ENCODE measurements at regions of chr1 and their contacts with region 1.

Region 1: DNA sequence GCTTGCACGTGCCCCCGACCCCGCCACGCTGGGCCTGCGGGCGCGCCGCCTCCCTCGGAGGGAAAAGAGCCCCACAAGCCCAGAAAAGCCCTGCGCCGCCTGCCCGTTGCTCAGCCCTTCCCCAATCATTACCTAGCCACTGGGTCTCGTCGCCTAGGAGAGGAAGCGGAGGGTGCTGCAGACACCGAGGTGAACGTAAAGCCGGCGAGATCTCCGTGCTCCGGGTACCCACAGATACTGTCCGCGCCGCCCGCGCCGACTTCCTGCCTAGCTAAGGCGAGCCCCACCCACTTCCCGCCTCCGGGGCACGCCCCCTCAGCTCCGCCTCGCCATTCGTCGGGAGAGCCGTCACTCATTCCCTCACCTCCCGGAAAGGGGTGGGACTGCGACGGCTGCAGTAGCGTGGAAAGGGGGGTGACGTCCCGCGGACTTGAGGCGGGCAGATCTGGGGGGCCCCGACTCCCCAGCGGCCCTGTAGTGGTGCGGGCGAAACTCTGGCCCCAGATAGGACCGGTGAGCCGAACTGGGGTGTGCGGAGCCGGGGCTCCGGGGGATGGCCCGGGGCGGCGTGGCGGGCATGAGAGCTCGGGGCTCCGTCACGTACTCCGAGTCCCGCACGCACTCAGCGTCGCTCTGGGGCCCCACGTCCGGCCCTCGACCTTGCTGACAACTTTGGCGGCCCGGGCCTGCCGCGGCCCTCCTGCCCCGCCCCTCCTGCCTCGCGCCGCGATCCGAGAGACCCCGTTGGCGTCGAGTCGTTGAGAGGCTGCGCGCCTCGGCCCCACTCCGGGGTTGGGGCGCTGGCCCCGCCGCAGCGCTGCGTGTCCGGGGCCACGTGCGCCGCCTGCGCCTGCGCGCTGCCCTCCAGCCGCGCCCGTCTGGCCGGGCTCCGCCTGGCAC is at the start of gene ENO1:
- DNase-seq: peak; percentile 90 to 100
- H3K4me3 ChIP-seq: peak within 1 kb of the TSS; percentile 90 to 97 (median 92)
- H3K27ac ChIP-seq: peak within 1 kb of the TSS; percentile 92
- H3K4me1 ChIP-seq: peaks cover 6 to 21% (median 15%) of the 10 kb centered on the region in 4 experiments
- H3K27me3 ChIP-seq: no peaks in the 10 kb centered on the region
- CTCF ChIP-seq: no peak
- EP300 ChIP-seq: no peak
- POLR2A ChIP-seq: peak; percentile 87 to 89
- RAD21 ChIP-seq: no peak
- total RNA-seq, gene ENO1: 2,080 and 2,117 TPM in 2 replicates

Region 2: DNA sequence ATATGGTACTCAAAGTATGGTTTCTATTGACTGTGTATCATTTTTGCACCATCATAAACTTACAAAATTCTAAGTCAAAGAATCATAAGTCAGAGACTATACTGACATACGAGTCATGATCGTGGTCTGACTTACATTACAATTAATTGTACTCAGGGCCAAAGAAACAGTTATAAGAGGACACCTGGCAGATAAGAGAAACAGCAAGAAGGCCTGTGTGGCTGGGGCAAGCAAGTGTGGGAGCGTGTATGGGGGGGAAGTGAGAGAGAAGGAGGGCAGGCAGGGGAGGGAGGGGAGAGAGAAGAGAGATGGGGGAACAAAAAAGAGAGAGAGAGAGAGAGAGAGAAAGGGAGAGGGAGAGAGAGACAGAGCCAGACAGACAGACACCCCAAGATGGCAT is 132.1 kb before region 1 on chr1:
- CTCF ChIA-PET with region 1: no interaction called
- POLR2A ChIA-PET with region 1: no interaction called
- DNase-seq: no peak
- H3K4me3 ChIP-seq: no peak overlapping the region
- H3K27ac ChIP-seq: no peak overlapping the region
- H3K4me1 ChIP-seq: no peaks in the 10 kb centered on the region; a peak in 1 of 7 replicates
- H3K27me3 ChIP-seq: no peaks in the 10 kb centered on the region
- CTCF ChIP-seq: no peak
- EP300 ChIP-seq: no peak
- POLR2A ChIP-seq: no peak
- RAD21 ChIP-seq: no peak

Region 3: GRCh38 chr1:8858888-8859706 is 19.6 kb before region 1 on chr1:
- CTCF ChIA-PET with region 1: interaction called, 59 read pairs
- POLR2A ChIA-PET with region 1: interaction called, 880 read pairs
- DNase-seq: no peak
- H3K4me3 ChIP-seq: no peak overlapping the region
- H3K27ac ChIP-seq: no peak overlapping the region
- H3K4me1 ChIP-seq: peaks cover 2 to 6% (median 3%) of the 10 kb centered on the region in 4 experiments; a peak in 6 of 7 replicates
- H3K27me3 ChIP-seq: no peaks in the 10 kb centered on the region
- CTCF ChIP-seq: peak in 2 of 3 experiments; percentile 61 to 72; a peak in 3 of 4 replicates
- EP300 ChIP-seq: no peak
- POLR2A ChIP-seq: peak; percentile 23 to 31; a peak in 2 of 3 replicates
- RAD21 ChIP-seq: peak; percentile 48 to 62; a peak in 3 of 4 replicates

Region 4: DNA sequence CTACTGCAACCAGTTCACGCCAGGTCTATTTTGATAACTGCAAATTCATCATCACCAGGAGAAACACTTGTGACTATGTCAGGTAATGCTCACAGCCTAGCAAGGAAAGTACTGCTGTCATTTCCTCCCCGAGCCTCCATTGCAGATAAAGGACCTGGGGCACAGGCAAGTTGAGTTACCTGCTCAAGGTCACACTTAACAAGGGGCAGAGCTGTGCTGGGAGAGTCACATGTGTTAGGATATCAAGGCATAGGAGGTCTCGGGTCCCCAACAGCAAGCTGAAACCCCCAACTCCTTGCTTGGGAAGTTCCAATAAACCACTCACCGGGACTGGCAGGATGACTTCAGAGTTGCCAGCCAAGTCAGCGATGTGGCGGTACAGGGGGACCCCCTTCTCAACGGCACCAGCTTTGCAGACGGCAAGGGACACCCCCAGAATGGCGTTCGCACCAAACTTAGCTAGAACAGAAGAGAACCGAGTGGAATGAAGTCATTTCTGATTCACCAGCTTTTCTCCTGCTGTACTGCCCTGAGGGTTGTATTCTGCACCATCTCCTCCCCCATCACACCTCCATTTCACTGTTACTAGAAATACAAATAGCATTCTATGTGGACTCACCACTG is 11.8 kb before region 1 on chr1:
- CTCF ChIA-PET with region 1: interaction called, 59 read pairs
- POLR2A ChIA-PET with region 1: interaction called, 880 read pairs
- DNase-seq: no peak
- H3K4me3 ChIP-seq: no peak overlapping the region
- H3K27ac ChIP-seq: no peak overlapping the region
- H3K4me1 ChIP-seq: peaks cover 0 to 13% (median 4%) of the 10 kb centered on the region in 4 experiments; a peak in 5 of 7 replicates
- H3K27me3 ChIP-seq: no peaks in the 10 kb centered on the region
- CTCF ChIP-seq: no peak
- EP300 ChIP-seq: no peak
- POLR2A ChIP-seq: peak in 1 of 2 experiments; percentile 53; a peak in 1 of 3 replicates
- RAD21 ChIP-seq: no peak

Region 5: DNA sequence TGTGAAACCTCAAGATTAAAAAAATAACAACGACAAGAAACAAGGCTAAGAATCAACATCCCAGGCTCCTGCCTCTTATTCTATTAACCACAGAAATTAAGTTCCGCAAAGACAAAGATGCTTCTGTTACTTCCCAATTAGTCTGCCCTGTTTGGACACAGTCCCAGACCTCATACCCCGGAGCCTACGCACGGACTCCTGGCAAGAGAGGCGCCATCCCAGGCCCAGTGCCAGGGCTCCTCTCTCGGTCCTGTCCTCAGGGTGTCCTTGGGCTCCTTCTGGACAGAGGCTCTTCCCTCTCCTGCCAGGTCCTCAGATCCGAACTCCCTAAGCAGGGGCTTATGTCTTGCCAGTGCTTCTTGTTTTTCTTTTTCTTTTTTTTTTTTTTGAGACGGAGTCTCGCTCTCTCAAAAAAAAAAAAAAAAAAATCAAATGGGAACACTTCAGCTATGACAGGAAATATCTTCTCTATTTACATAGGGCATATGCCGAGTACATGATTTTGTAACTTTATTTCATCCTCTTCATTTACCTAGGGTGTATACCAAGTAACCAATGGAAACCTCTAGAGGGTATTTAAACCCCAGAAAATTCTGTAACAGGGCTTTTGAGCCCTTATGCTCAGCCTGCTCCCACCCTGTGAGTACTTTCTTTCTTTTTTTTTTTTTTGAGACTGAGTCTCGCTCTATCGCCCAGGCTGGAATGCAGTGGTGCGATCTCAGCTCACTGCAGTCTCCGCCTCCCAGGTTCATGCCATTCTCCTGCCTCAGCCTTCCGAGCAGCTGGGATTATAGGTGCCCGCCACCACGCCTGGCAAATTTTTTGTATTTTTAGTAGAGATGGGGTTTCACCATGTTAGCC is 11.5 kb after region 1 on chr1:
- CTCF ChIA-PET with region 1: interaction called, 4 read pairs
- POLR2A ChIA-PET with region 1: interaction called, 27 read pairs
- DNase-seq: no peak
- H3K4me3 ChIP-seq: no peak overlapping the region
- H3K27ac ChIP-seq: no peak overlapping the region
- H3K4me1 ChIP-seq: no peaks in the 10 kb centered on the region
- H3K27me3 ChIP-seq: no peaks in the 10 kb centered on the region; a peak in 1 of 7 replicates
- CTCF ChIP-seq: no peak
- EP300 ChIP-seq: no peak
- POLR2A ChIP-seq: no peak
- RAD21 ChIP-seq: no peak

Region 6: DNA sequence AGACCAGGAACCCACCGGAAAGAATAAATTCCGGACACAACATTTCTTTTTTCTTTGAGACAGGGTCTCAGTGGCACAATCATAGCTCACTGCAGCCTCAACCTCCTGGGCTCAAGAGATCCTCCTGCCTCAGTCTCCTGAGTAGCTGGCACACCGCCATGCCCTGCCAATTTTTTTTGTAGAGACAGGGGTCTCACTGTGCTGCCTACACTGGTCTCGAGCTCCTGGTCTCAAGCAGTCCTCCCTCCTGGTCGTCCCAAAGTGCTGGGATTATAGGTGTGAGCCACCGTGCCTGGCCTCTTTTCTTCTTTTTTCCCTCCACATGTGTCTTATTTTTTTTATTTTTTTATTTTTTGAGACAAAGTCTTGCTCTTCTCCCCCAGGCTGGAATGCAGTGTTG is 20.4 kb after region 1 on chr1:
- CTCF ChIA-PET with region 1: interaction called, 8 read pairs
- POLR2A ChIA-PET with region 1: interaction called, 13 read pairs
- DNase-seq: no peak
- H3K4me3 ChIP-seq: no peak overlapping the region
- H3K27ac ChIP-seq: no peak overlapping the region
- H3K4me1 ChIP-seq: no peaks in the 10 kb centered on the region
- H3K27me3 ChIP-seq: no peaks in the 10 kb centered on the region
- CTCF ChIP-seq: no peak
- EP300 ChIP-seq: no peak
- POLR2A ChIP-seq: no peak
- RAD21 ChIP-seq: no peak

Region 7: GRCh38 chr1:8905582-8906191 is 27.0 kb after region 1 on chr1:
- CTCF ChIA-PET with region 1: interaction called, 5 read pairs
- POLR2A ChIA-PET with region 1: interaction called, 30 read pairs
- DNase-seq: no peak
- H3K4me3 ChIP-seq: no peak overlapping the region
- H3K27ac ChIP-seq: no peak overlapping the region
- H3K4me1 ChIP-seq: peaks cover 0 to 5% (median 3%) of the 10 kb centered on the region in 4 experiments; a peak in 3 of 7 replicates
- H3K27me3 ChIP-seq: no peaks in the 10 kb centered on the region
- CTCF ChIP-seq: no peak
- EP300 ChIP-seq: no peak
- POLR2A ChIP-seq: no peak
- RAD21 ChIP-seq: no peak

Measured in H1 (cell line).